Activated B cell treated with CpG ODN at 0.5 μM for 24 hours (primary cell): ENCODE measurements at regions of chr5 and their contacts with region 1.

Region 1: GRCh38 chr5:94849821-94850736 is 231.6 kb downstream of the SLF1 start:
- DNase-seq: no peak
- ATAC-seq: peak; percentile 80
- H3K4me3 Mint-ChIP-seq: no peak overlapping the region
- H3K27ac Mint-ChIP-seq: no peak overlapping the region
- H3K4me1 Mint-ChIP-seq: no peaks in the 10 kb centered on the region
- H3K27me3 Mint-ChIP-seq: peaks cover 2% of the 10 kb centered on the region
- CTCF ChIP-seq: peak; percentile 53

Region 2: GRCh38 chr5:93620487-93621326 is 1229.4 kb before region 1 on chr5:
- CTCF ChIA-PET with region 1: no interaction called
- POLR2A ChIA-PET with region 1: no interaction called
- intact Hi-C with region 1: loop called (anchors 5 kb)
- DNase-seq: no peak
- ATAC-seq: peak; percentile 89
- H3K4me3 Mint-ChIP-seq: peak overlapping the region; percentile 92
- H3K27ac Mint-ChIP-seq: peak overlapping the region; percentile 64
- H3K4me1 Mint-ChIP-seq: peaks cover 16% of the 10 kb centered on the region
- H3K27me3 Mint-ChIP-seq: peaks cover 2% of the 10 kb centered on the region
- CTCF ChIP-seq: no peak

Region 3: GRCh38 chr5:94111209-94112004 is 738.7 kb before region 1 on chr5:
- CTCF ChIA-PET with region 1: no interaction called
- POLR2A ChIA-PET with region 1: no interaction called
- intact Hi-C with region 1: loop called (anchors 1 kb)
- DNase-seq: peak; percentile 86
- ATAC-seq: peak; percentile 95
- H3K4me3 Mint-ChIP-seq: peak overlapping the region; percentile 93
- H3K27ac Mint-ChIP-seq: peak overlapping the region; percentile 86
- H3K4me1 Mint-ChIP-seq: peaks cover 25% of the 10 kb centered on the region
- H3K27me3 Mint-ChIP-seq: peaks cover 11% of the 10 kb centered on the region
- CTCF ChIP-seq: no peak

Region 4: DNA sequence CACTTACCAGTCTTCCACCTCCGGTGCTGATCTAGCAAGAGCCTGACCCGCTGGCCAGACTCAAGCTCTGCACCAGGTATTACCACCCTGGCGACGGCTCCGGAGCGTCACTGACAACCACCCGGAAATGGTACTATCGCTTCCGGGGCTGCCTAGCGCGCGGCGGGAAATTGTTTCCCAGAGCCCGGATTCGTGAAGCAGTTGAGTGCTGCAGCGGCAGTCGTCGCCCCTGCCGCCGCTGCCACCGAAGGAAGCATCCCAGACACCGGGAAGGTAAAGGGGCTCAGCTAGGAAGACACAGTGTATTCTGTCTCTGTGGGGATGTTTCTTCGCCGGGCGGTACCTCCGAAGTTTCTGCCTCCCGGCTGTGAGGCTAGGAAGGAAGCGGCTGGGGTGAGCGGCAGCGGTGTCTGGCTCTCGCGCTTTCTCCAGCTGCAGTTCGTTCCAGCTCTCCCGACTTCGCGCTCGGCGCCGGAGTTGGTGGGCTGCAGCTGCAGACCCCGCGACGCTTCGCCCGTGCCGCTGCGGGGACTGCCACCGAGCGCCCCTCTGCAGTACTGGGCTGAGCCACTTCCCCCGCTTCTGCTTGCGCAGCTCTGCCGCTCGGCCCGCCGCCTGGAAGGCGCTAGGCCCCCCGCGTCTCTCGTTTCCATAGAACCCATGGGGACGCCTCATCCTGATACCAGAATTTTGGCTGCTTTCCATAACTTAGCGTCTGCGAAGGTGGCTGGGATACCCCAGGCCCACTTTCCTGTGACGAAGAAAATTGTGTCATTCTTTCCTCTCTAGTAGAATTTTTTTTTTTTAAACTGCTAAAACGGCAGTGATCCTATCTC is 231.4 kb before region 1 on chr5 and contains the starts of genes KIAA0825 and SLF1:
- CTCF ChIA-PET with region 1: no interaction called
- POLR2A ChIA-PET with region 1: no interaction called
- intact Hi-C with region 1: loop called (anchors 5 kb)
- DNase-seq: peak; percentile 70
- ATAC-seq: peak; percentile 94
- H3K4me3 Mint-ChIP-seq: peak within 1 kb of the TSS; percentile 96
- H3K27ac Mint-ChIP-seq: peak within 1 kb of the TSS; percentile 82
- H3K4me1 Mint-ChIP-seq: peaks cover 22% of the 10 kb centered on the region
- H3K27me3 Mint-ChIP-seq: no peaks in the 10 kb centered on the region
- CTCF ChIP-seq: no peak
- total RNA-seq, gene KIAA0825: 1.4 and 2.3 TPM in 2 replicates
- total RNA-seq, gene SLF1: 7.3 and 12.0 TPM in 2 replicates